ENCODE measurements at regions of chr1 and their contacts with region 1.

Region 1: DNA sequence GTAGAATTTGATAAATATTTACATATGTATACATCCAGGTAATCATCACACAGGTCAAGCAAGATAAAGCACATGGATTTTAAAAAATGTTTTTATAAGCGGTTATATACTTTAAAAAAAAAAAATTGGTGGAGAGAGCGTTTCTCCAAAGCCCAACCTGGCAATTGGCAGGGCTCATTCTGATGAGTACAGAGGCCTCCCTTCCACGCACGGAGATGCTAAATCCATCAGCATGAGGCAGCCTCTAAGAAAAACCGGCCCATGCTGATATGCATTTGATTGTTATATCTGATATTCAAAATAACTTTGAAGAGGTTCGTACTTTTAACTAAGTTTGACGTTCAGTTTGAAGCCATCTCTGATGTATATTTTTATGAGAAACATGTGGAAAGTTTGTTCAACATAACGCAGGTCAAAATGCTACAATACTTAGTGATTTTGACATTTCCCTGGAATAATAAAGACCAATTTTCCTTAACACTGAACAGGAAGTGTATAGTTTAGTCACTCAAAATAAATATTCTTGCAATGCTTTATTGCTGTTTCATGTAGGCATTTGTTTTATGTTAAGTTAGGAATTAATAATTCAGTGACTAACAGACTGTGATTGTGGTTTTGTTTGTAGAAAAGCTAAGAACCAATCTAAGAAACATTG is 151.7 kb downstream of the NR5A2 start:
- DNase-seq: no peak
- H3K4me3 Mint-ChIP-seq: no peak overlapping the region
- H3K27ac Mint-ChIP-seq: no peak overlapping the region
- H3K4me1 Mint-ChIP-seq: peaks cover 4% of the 10 kb centered on the region
- H3K27me3 Mint-ChIP-seq: peaks cover 27% of the 10 kb centered on the region

Region 2: GRCh38 chr1:200198247-200198646 is 19.0 kb after region 1 on chr1:
- intact Hi-C with region 1: loop called (anchors 2 kb)
- DNase-seq: no peak
- H3K4me3 Mint-ChIP-seq: no peak overlapping the region
- H3K27ac Mint-ChIP-seq: no peak overlapping the region
- H3K4me1 Mint-ChIP-seq: no peaks in the 10 kb centered on the region
- H3K27me3 Mint-ChIP-seq: peaks cover 23% of the 10 kb centered on the region